WTC11 (cell line): ENCODE measurements at regions of chr3 and their contacts with region 1.

Region 1: DNA sequence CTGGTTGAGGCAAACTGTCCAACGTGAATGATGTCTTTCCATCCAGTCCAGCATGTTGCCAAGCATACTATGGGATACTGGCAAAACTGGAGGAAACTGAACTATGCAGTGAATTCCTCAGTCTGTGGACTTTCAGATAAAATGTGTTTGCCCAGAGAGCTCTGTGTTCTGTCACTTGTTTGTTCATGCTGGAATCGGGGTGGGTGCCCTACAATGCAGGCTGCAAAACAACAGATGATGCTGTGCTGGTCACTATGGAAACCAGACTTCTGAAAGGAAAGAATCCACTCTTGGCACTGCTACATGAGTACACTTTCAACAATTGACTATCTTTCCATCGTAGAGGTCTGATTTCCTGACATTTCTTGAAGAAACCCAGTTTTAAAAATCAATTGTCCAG is 272.5 kb upstream of the ARHGEF26 start:
- DNase-seq: no peak
- ATAC-seq: no peak
- H3K4me3 Mint-ChIP-seq: no peak overlapping the region
- H3K27ac Mint-ChIP-seq: no peak overlapping the region
- H3K4me1 Mint-ChIP-seq: peaks cover 4% of the 10 kb centered on the region
- H3K27me3 Mint-ChIP-seq: no peaks in the 10 kb centered on the region
- CTCF ChIP-seq: no peak

Region 2: DNA sequence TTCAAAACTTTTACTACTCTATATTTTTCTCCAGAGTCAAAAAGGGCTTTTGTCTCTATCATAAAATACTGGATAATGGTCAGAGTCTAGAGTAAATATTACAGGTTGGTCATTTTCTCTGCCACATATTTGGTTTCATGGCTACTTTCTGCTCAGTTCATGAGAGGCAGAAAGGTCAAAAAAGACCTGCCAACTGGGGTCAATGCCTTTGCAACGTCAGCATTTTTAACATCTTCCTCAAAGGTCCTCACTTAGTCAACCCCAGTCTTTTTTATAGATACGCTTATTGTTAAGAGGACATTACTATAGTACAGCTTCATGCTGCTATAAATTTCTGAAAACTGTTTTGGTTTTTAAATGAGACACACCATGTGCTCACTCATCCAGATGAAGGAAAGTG is 39.6 kb before region 1 on chr3:
- CTCF ChIA-PET with region 1: no interaction called
- POLR2A ChIA-PET with region 1: no interaction called
- DNase-seq: no peak
- ATAC-seq: no peak
- H3K4me3 Mint-ChIP-seq: no peak overlapping the region
- H3K27ac Mint-ChIP-seq: no peak overlapping the region
- H3K4me1 Mint-ChIP-seq: no peaks in the 10 kb centered on the region
- H3K27me3 Mint-ChIP-seq: no peaks in the 10 kb centered on the region; the same call in 1 of the 2 replicates
- CTCF ChIP-seq: no peak

Region 3: GRCh38 chr3:153835540-153835939 is 13.2 kb before region 1 on chr3:
- CTCF ChIA-PET with region 1: interaction called, 10 read pairs
- POLR2A ChIA-PET with region 1: interaction called, 3 read pairs
- DNase-seq: peak; percentile 39
- ATAC-seq: peak; percentile 84
- H3K4me3 Mint-ChIP-seq: no peak overlapping the region
- H3K27ac Mint-ChIP-seq: no peak overlapping the region
- H3K4me1 Mint-ChIP-seq: peaks cover 10% of the 10 kb centered on the region
- H3K27me3 Mint-ChIP-seq: no peaks in the 10 kb centered on the region
- CTCF ChIP-seq: no peak

Region 4: DNA sequence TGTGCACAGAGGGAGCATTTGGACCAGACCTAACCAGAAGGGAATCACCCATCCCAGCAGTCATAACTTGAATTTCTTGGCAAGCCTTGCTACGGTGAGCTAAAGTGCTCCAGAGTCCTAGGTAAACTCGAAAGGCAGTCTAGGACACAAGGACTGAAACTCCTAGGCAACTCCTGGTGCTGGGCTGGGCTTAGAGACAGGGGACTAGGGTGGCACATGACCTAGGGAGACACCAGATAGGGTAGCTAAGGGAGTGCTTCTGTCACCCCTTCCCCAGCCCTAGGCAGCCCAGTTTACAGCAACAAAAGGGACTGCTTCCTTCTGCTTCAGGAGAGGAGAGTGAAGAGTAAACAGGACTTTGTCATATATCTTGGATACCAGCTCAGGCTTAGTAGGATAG is 16.1 kb after region 1 on chr3:
- CTCF ChIA-PET with region 1: no interaction called
- POLR2A ChIA-PET with region 1: no interaction called
- DNase-seq: no peak
- ATAC-seq: no peak
- H3K4me3 Mint-ChIP-seq: no peak overlapping the region
- H3K27ac Mint-ChIP-seq: no peak overlapping the region
- H3K4me1 Mint-ChIP-seq: no peaks in the 10 kb centered on the region
- H3K27me3 Mint-ChIP-seq: no peaks in the 10 kb centered on the region
- CTCF ChIP-seq: no peak